Calu3 (cell line): ENCODE measurements at regions of chr6 and their contacts with region 1.

Region 1: GRCh38 chr6:8342420-8342819 is 92.9 kb downstream of the SLC35B3 start:
- DNase-seq: no peak
- H3K4me3 Mint-ChIP-seq: no peak overlapping the region
- H3K27ac Mint-ChIP-seq: no peak overlapping the region
- H3K4me1 Mint-ChIP-seq: no peaks in the 10 kb centered on the region
- H3K27me3 Mint-ChIP-seq: no peaks in the 10 kb centered on the region
- CTCF ChIP-seq: no peak

Region 2: GRCh38 chr6:7367408-7367807 is 975.0 kb before region 1 on chr6:
- CTCF ChIA-PET with region 1: no interaction called
- intact Hi-C with region 1: loop called (anchors 10 kb)
- DNase-seq: no peak
- H3K4me3 Mint-ChIP-seq: no peak overlapping the region
- H3K27ac Mint-ChIP-seq: no peak overlapping the region
- H3K4me1 Mint-ChIP-seq: no peaks in the 10 kb centered on the region
- H3K27me3 Mint-ChIP-seq: no peaks in the 10 kb centered on the region
- CTCF ChIP-seq: no peak